ENCODE measurements at regions of chr9 and their contacts with region 1.

Region 1: DNA sequence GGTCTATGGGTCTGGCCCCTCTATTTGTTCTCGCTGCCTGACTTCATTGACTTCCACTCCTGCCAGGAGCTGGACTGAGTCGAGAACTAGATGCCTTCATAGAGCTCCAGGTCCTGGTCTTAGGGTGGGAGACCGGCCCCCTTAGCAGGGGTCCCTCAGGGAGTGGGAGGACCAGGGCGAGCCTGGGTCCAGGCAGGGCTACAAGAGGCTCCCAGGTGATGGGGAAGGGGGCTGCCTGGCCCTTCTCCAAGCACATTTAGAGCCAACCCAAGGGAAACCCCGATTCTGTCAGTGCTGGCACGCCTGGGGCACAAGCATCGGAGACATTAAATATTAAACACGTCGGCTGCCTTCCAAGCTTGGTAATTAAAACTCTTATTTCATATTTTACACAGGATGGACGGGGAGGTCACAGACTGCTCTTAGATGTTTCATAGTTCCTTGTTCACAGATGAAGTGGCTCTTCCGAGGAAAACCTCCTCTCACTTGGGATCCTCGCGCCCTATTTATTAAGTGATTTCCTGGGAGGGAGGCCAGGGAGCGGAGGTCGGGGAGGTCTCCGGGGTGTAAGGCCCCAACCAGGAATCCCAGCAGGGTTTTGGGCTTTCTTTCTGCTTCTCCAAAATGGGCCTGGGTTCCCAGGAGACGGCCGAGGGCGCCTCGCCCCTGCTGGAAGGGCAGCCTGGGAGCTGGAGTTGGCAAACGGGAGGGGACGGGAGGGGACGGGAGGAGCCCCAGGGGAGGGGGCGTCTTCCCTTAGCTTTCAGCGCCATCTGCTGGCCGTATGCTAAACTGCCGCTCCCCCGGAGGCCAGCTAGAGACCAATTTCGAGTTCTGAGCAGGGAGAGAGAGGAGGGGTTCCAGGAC is 23.4 kb upstream of the ZBTB43 start:
- DNase-seq: peak; percentile 63
- ATAC-seq: peak; percentile 92
- H3K4me3 ChIP-seq: peak overlapping the region in 1 of 3 experiments; percentile 24; a peak in 1 of 6 replicates
- H3K27ac ChIP-seq: no peak overlapping the region
- H3K4me1 ChIP-seq: peaks cover 8% of the 10 kb centered on the region; the same call in 1 of the 2 replicates
- H3K27me3 ChIP-seq: peaks cover 0 to 35% of the 10 kb centered on the region in 2 experiments; a peak in 2 of 5 replicates
- CTCF ChIP-seq: peak; percentile 94
- EP300 ChIP-seq: no peak
- POLR2A ChIP-seq: no peak
- RAD21 ChIP-seq: peak; percentile 90

Region 2: DNA sequence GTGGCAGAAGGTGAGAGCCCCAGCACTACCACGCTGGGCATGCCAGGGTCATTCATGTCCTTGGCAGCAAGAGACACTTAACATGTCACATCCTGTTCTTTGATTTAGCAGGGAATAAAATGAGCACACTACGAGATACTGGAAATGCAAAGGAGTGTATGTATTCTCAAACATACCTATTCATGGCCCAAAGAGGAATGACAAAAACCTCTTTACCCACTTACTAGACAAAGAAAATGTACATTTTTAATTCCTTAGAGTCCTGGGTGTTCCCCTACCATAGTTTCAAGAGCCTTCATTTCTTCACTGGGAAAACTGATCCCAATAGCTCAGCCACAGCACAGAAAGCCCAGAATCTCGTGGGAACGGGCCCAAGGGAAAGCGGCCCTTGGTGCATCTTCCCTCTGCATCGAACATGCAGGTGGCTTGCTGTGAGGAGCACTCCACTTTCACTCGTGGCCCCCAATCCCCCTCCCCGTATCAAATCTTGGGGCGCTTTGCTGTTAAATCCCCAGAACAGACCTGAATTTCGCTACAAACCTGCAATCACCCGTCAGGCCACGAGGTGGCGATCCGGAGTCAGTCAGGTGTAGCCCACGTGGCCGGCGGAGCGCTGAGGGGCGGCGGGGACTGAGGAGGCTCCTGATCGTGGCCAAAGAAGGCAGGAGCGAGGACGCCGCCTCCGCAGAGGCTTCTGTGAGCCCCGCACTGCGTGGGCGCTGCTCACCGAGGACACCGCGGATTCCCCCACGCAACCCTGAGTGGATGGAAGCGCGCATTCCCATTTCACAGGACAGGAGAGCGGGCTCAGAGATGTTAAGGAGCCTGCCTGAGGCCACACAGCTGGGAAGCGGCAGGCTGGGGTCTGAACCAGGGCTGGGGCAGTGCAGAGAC is 76.3 kb before region 1 on chr9:
- CTCF ChIA-PET with region 1: interaction called, 91 read pairs
- POLR2A ChIA-PET with region 1: interaction called, 8 read pairs
- in situ Hi-C with region 1: loop called (anchors 5 kb)
- intact Hi-C with region 1: loop called (anchors 1 kb)
- DNase-seq: peak; percentile 48
- ATAC-seq: peak; percentile 76
- H3K4me3 ChIP-seq: no peak overlapping the region; a peak in 1 of 6 replicates
- H3K27ac ChIP-seq: no peak overlapping the region
- H3K4me1 ChIP-seq: peaks cover 5% of the 10 kb centered on the region
- H3K27me3 ChIP-seq: peaks cover 9 to 55% of the 10 kb centered on the region in 2 experiments; a peak in 4 of 5 replicates
- CTCF ChIP-seq: peak; percentile 94
- EP300 ChIP-seq: no peak
- POLR2A ChIP-seq: no peak
- RAD21 ChIP-seq: peak; percentile 69